Cardiac septum (tissue), 1 donor: ENCODE measurements at regions of chr5 and their contacts with region 1.

Region 1: GRCh38 chr5:148730943-148731861 is 76.9 kb upstream of the HTR4 start:
- DNase-seq: no peak

Region 2: DNA sequence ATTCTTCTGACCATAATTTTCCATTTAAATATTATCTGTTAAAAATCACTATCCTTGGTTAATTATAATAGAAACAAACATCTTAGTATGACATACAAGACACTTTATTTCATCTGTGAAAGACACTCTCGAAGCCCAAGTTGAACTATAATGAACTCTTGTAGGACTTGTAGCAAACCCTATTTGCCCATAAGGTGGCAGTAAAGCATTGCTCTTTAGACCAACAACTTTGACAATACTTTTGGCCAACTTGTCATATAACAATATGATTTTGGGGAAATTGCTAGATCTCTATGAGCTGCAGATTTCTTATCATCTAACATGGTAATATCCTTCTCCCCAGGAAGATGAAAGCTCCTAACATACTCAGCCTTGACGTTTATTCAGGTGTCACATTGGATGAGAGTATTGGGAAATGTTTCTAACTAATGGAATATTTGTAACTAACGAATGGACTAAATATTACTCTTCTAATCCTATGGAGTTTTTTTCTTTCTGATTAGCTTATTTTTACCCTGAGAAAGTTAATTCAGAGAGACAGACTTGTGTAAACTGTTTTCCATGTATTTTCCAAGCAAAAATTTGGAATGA is 551.9 kb before region 1 on chr5:
- intact Hi-C with region 1: loop called (anchors 2 kb)
- DNase-seq: no peak

Region 3: GRCh38 chr5:148443998-148444397 is 287.2 kb before region 1 on chr5:
- intact Hi-C with region 1: loop called (anchors 2 kb)
- DNase-seq: no peak

Region 4: DNA sequence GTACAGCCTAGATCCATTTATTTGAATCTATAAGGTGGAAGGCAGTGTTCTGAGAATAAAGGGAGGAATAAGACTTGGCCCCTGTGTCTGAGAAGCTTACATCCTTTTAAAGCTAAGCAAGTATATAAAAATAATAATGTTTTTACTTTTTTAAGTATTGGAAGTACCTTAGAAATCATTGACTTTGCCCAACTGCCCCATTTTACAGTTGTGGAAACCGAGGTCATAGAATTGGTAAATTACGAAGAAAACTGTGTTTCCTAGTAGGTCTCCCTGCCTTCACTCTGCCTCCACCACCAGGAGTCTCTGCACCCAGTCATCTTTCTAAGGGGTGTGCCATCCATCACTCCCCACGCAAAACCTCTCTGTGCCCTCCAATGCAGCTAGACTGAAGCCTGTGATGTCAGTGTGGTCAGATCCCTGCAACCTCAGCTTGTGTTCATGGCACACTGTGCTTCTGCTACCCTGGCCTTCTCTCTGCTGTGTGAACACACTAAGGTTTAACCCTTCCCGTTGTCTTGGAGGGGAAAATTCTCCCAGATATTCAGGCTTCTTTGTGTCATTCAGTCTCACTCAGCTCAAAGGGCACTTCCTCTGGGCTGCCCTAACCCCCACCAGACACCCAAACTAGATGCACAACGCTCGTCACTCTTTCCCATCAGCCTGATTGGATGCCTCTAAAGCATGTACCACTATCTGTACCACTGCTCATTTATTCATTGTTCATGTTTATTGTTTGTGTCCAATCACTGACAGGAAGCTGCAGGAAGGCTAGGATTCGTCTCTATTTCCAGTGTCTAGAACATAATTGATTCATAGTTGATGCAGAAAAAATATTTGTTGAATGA is 113.5 kb after region 1 on chr5:
- intact Hi-C with region 1: no loop called
- DNase-seq: no peak

Region 5: DNA sequence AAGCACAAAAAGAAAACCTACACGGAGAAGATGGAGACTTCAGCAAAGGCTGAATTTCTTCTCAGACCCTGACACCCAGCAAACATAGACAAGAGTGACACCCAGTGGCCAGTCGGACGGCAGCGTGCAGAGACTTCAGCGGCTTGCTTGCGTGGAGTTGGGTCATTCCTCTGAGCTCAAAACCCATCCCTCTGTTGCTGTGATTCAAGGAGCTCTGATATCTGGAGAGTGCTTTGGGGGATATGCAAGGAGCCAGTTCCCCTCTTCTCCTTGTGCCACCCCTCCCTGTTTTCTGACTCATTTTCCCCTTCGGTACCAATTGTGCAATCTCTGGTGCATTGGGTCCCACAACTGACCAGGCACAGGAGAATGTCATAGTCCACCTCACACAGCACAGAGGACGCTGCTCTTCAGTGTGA is 304.2 kb after region 1 on chr5:
- intact Hi-C with region 1: loop called (anchors 2 kb)
- DNase-seq: peak; percentile 89

Region 6: DNA sequence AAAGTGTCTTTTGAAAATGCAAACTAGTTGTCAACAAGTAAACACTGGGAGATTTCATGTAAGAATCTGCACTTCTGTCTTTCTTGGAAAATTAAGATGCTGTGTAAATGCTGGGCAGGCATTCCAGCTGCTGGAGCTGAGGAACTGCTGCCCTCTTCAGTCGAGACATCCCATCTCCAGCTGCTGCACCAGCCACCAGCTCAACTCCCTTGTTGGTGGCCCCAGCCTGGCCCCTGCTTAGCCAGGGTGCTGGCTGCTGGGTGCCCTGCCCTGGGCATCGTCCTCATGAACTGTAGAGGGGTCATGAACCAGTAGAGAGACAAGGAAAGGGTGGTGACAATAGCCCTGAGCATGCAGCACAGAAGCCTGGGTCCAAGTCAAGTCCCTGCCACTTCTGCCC is 507.4 kb after region 1 on chr5:
- intact Hi-C with region 1: loop called (anchors 10 kb)
- DNase-seq: no peak